K562 (cell line): ENCODE measurements at regions of chr5 and their contacts with region 1.

Region 1: GRCh38 chr5:163408311-163408923 is 29.0 kb upstream of the CCNG1 start:
- DNase-seq: peak; percentile 63 to 76 (median 66)
- ATAC-seq: peak; percentile 93
- H3K4me3 ChIP-seq: no peak overlapping the region
- H3K27ac ChIP-seq: no peak overlapping the region
- H3K4me1 ChIP-seq: no peaks in the 10 kb centered on the region; a peak in 1 of 5 replicates
- H3K27me3 ChIP-seq: no peaks in the 10 kb centered on the region
- CTCF ChIP-seq: peak; percentile 79 to 87 (median 79)
- EP300 ChIP-seq: no peak
- POLR2A ChIP-seq: no peak
- RAD21 ChIP-seq: peak; percentile 86 to 87

Region 2: GRCh38 chr5:161544350-161544765 is 1864.1 kb before region 1 on chr5:
- CTCF ChIA-PET with region 1: interaction called, 4 read pairs
- POLR2A ChIA-PET with region 1: no interaction called
- in situ Hi-C with region 1: no loop called
- intact Hi-C with region 1: loop called (anchors 10 kb)
- DNase-seq: peak; percentile 41 to 72 (median 55)
- ATAC-seq: peak; percentile 69
- H3K4me3 ChIP-seq: no peak overlapping the region
- H3K27ac ChIP-seq: no peak overlapping the region
- H3K4me1 ChIP-seq: no peaks in the 10 kb centered on the region; a peak in 1 of 5 replicates
- H3K27me3 ChIP-seq: no peaks in the 10 kb centered on the region
- CTCF ChIP-seq: peak; percentile 36 to 70 (median 52)
- EP300 ChIP-seq: no peak
- POLR2A ChIP-seq: no peak
- RAD21 ChIP-seq: peak; percentile 39 to 52; a peak in 3 of 4 replicates

Region 3: GRCh38 chr5:163079618-163080017 is 328.8 kb before region 1 on chr5:
- CTCF ChIA-PET with region 1: no interaction called
- POLR2A ChIA-PET with region 1: no interaction called
- in situ Hi-C with region 1: no loop called
- intact Hi-C with region 1: loop called (anchors 5 kb)
- DNase-seq: peak in 1 of 4 experiments; percentile 11
- ATAC-seq: no peak
- H3K4me3 ChIP-seq: no peak overlapping the region
- H3K27ac ChIP-seq: no peak overlapping the region
- H3K4me1 ChIP-seq: no peaks in the 10 kb centered on the region
- H3K27me3 ChIP-seq: no peaks in the 10 kb centered on the region
- CTCF ChIP-seq: peak in 2 of 3 experiments; percentile 27 to 35; a peak in 3 of 6 replicates
- EP300 ChIP-seq: no peak
- POLR2A ChIP-seq: no peak
- RAD21 ChIP-seq: peak in 1 of 2 experiments; percentile 42; a peak in 2 of 4 replicates

Region 4: GRCh38 chr5:163248871-163249270 is 159.5 kb before region 1 on chr5:
- CTCF ChIA-PET with region 1: no interaction called
- POLR2A ChIA-PET with region 1: no interaction called
- in situ Hi-C with region 1: no loop called
- intact Hi-C with region 1: no loop called
- DNase-seq: no peak
- ATAC-seq: no peak
- H3K4me3 ChIP-seq: no peak overlapping the region
- H3K27ac ChIP-seq: no peak overlapping the region
- H3K4me1 ChIP-seq: no peaks in the 10 kb centered on the region
- H3K27me3 ChIP-seq: no peaks in the 10 kb centered on the region
- CTCF ChIP-seq: no peak
- EP300 ChIP-seq: no peak
- POLR2A ChIP-seq: no peak
- RAD21 ChIP-seq: no peak

Region 5: GRCh38 chr5:163306421-163306820 is 102.0 kb before region 1 on chr5:
- CTCF ChIA-PET with region 1: interaction called, 3 read pairs
- POLR2A ChIA-PET with region 1: no interaction called
- in situ Hi-C with region 1: no loop called
- intact Hi-C with region 1: loop called (anchors 1 kb)
- DNase-seq: peak in 2 of 4 experiments; percentile 10 to 26
- ATAC-seq: peak; percentile 58; the same call in 1 of the 3 replicates
- H3K4me3 ChIP-seq: no peak overlapping the region
- H3K27ac ChIP-seq: no peak overlapping the region
- H3K4me1 ChIP-seq: no peaks in the 10 kb centered on the region
- H3K27me3 ChIP-seq: no peaks in the 10 kb centered on the region
- CTCF ChIP-seq: peak; percentile 8 to 51 (median 28); a peak in 3 of 6 replicates
- EP300 ChIP-seq: no peak
- POLR2A ChIP-seq: no peak
- RAD21 ChIP-seq: peak; percentile 13 to 50; a peak in 2 of 4 replicates

Region 6: DNA sequence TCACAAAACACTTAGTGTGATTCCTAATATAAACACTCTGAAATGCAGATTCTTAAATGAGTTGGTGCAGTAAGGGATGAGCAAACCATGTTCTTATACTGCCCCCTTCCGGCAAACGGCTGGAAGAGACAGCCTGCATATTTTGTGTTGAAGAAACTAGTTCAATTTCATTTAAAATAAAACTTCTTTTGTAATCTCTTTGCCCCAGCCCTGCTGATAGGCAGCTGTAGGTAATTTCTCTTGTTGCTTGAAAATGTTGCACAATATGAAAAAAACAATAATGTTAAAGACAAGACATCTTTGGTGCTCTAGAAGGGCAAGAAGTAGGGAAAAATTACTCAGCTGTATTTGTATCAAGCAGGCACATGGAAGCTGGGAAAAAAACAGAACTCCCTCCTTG is 60.7 kb before region 1 on chr5:
- CTCF ChIA-PET with region 1: no interaction called
- POLR2A ChIA-PET with region 1: interaction called, 6 read pairs
- in situ Hi-C with region 1: no loop called
- intact Hi-C with region 1: loop called (anchors 1 kb)
- DNase-seq: peak; percentile 64 to 80 (median 66)
- ATAC-seq: peak; percentile 90
- H3K4me3 ChIP-seq: no peak overlapping the region
- H3K27ac ChIP-seq: no peak overlapping the region
- H3K4me1 ChIP-seq: no peaks in the 10 kb centered on the region; a peak in 2 of 5 replicates
- H3K27me3 ChIP-seq: no peaks in the 10 kb centered on the region
- CTCF ChIP-seq: peak; percentile 67 to 91 (median 74)
- EP300 ChIP-seq: 0 out of 2 replicates have a peak, but pooled peaks have one; percentile 8
- POLR2A ChIP-seq: no peak
- RAD21 ChIP-seq: peak; percentile 84 to 87